B cell (primary cell): ENCODE measurements at regions of chr10 and their contacts with region 1.

Region 1: GRCh38 chr10:62816331-62817120 is at the start of gene EGR2:
- DNase-seq: peak; percentile 98
- ATAC-seq: peak; percentile 74
- H3K4me3 ChIP-seq: peak within 1 kb of the TSS; percentile 66 to 88 (median 72)
- H3K4me3 Mint-ChIP-seq: peak within 1 kb of the TSS; percentile 100
- H3K27ac ChIP-seq: peak within 1 kb of the TSS; percentile 77 to 84
- H3K27ac Mint-ChIP-seq: peak within 1 kb of the TSS; percentile 99
- H3K4me1 ChIP-seq: peaks cover 33 to 42% of the 10 kb centered on the region in 2 donors
- H3K4me1 Mint-ChIP-seq: peaks cover 54% of the 10 kb centered on the region
- H3K27me3 ChIP-seq: peaks cover 0 to 37% (median 9%) of the 10 kb centered on the region in 4 experiments
- H3K27me3 Mint-ChIP-seq: peaks cover 7% of the 10 kb centered on the region
- CTCF ChIP-seq: no peak
- total RNA-seq, gene EGR2: 6.3 and 6.6 TPM in 2 replicates

Region 2: GRCh38 chr10:62268399-62269114 is 548.0 kb before region 1 on chr10 and contains the start of gene RTKN2:
- CTCF ChIA-PET with region 1: no interaction called
- POLR2A ChIA-PET with region 1: no interaction called
- intact Hi-C with region 1: loop called (anchors 5 kb)
- DNase-seq: peak; percentile 81
- ATAC-seq: peak; percentile 90
- H3K4me3 ChIP-seq: peak within 1 kb of the TSS; percentile 51 to 73 (median 68)
- H3K4me3 Mint-ChIP-seq: peak within 1 kb of the TSS; percentile 92
- H3K27ac ChIP-seq: peak within 1 kb of the TSS in 1 of 2 donors; percentile 25
- H3K27ac Mint-ChIP-seq: no peak within 1 kb of the TSS
- H3K4me1 ChIP-seq: peaks cover 14 to 15% of the 10 kb centered on the region in 2 donors
- H3K4me1 Mint-ChIP-seq: peaks cover 11% of the 10 kb centered on the region
- H3K27me3 ChIP-seq: peaks cover 0 to 17% (median 9%) of the 10 kb centered on the region in 4 experiments
- H3K27me3 Mint-ChIP-seq: peaks cover 14% of the 10 kb centered on the region
- CTCF ChIP-seq: no peak
- total RNA-seq, gene RTKN2: 0.22 and 0.53 TPM in 2 replicates

Region 3: DNA sequence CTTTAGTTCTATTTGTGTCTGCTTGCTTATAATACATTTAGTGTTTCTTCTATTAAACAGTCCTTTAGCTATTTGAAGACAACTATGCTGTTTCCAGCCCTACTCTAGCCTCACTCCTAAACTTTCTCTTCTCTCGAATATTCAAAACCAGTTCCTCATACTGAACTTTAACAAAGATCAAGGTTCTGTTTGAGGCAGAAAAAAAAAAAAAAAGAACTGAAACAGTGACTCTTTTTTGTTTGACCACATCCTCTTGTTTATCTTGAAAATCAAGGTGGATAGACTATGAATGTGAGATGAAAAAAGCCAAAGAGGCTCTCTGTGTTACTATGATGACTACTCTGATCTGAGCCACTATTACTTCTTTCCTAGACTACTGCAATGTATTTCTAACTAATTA is 288.1 kb before region 1 on chr10:
- CTCF ChIA-PET with region 1: interaction called, 26 read pairs
- POLR2A ChIA-PET with region 1: interaction called, 11 read pairs
- intact Hi-C with region 1: loop called (anchors 1 kb)
- DNase-seq: peak; percentile 77
- ATAC-seq: peak; percentile 64
- H3K4me3 ChIP-seq: peak overlapping the region in 1 of 5 experiments; percentile 38
- H3K4me3 Mint-ChIP-seq: peak overlapping the region; percentile 66
- H3K27ac ChIP-seq: peak overlapping the region; percentile 84 to 90
- H3K27ac Mint-ChIP-seq: peak overlapping the region; percentile 96
- H3K4me1 ChIP-seq: peaks cover 47 to 51% of the 10 kb centered on the region in 2 donors
- H3K4me1 Mint-ChIP-seq: peaks cover 62% of the 10 kb centered on the region
- H3K27me3 ChIP-seq: no peaks in the 10 kb centered on the region
- H3K27me3 Mint-ChIP-seq: no peaks in the 10 kb centered on the region
- CTCF ChIP-seq: no peak

Region 4: GRCh38 chr10:62632071-62632809 is 184.3 kb before region 1 on chr10:
- CTCF ChIA-PET with region 1: interaction called, 9 read pairs
- POLR2A ChIA-PET with region 1: interaction called, 4 read pairs
- intact Hi-C with region 1: loop called (anchors 1 kb)
- DNase-seq: peak; percentile 84
- ATAC-seq: peak; percentile 81
- H3K4me3 ChIP-seq: peak overlapping the region in 4 of 5 experiments; percentile 31 to 56 (median 40)
- H3K4me3 Mint-ChIP-seq: peak overlapping the region; percentile 90
- H3K27ac ChIP-seq: peak overlapping the region; percentile 94 to 95
- H3K27ac Mint-ChIP-seq: peak overlapping the region; percentile 99
- H3K4me1 ChIP-seq: peaks cover 54 to 59% of the 10 kb centered on the region in 2 donors
- H3K4me1 Mint-ChIP-seq: peaks cover 54% of the 10 kb centered on the region
- H3K27me3 ChIP-seq: no peaks in the 10 kb centered on the region
- H3K27me3 Mint-ChIP-seq: no peaks in the 10 kb centered on the region
- CTCF ChIP-seq: no peak

Region 5: GRCh38 chr10:62732841-62733653 is 83.5 kb before region 1 on chr10:
- CTCF ChIA-PET with region 1: interaction called, 18 read pairs
- POLR2A ChIA-PET with region 1: interaction called, 6 read pairs
- intact Hi-C with region 1: loop called (anchors 5 kb)
- DNase-seq: peak; percentile 80
- ATAC-seq: peak; percentile 75
- H3K4me3 ChIP-seq: no peak overlapping the region
- H3K4me3 Mint-ChIP-seq: no peak overlapping the region
- H3K27ac ChIP-seq: peak overlapping the region in 1 of 2 donors; percentile 79
- H3K27ac Mint-ChIP-seq: peak overlapping the region; percentile 93
- H3K4me1 ChIP-seq: peaks cover 38 to 42% of the 10 kb centered on the region in 2 donors
- H3K4me1 Mint-ChIP-seq: peaks cover 4% of the 10 kb centered on the region
- H3K27me3 ChIP-seq: no peaks in the 10 kb centered on the region
- H3K27me3 Mint-ChIP-seq: no peaks in the 10 kb centered on the region
- CTCF ChIP-seq: no peak

Region 6: DNA sequence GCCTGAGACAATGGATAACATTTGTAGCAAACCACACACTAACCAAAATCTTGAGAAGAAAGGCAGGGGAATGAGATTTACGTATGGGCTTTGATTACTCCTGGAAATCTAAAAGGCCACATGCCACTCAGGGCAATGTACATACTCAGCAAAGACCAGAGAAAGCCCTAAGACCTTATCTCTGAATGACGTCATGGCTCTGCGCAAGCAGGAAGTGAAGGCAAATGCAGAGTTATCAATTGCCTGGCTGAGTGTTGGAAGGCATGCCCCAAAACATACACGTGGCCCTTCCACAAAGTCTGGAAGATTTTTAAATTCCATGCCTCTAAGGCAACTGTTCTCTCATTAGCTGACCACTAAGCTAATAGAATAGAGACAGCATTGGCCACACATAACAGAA is 225.7 kb after region 1 on chr10:
- CTCF ChIA-PET with region 1: no interaction called
- POLR2A ChIA-PET with region 1: no interaction called
- intact Hi-C with region 1: no loop called
- DNase-seq: no peak
- ATAC-seq: no peak
- H3K4me3 ChIP-seq: no peak overlapping the region
- H3K4me3 Mint-ChIP-seq: no peak overlapping the region
- H3K27ac ChIP-seq: no peak overlapping the region
- H3K27ac Mint-ChIP-seq: no peak overlapping the region
- H3K4me1 ChIP-seq: no peaks in the 10 kb centered on the region
- H3K4me1 Mint-ChIP-seq: no peaks in the 10 kb centered on the region
- H3K27me3 ChIP-seq: peaks cover 0 to 13% (median 6%) of the 10 kb centered on the region in 4 experiments
- H3K27me3 Mint-ChIP-seq: peaks cover 48% of the 10 kb centered on the region
- CTCF ChIP-seq: no peak

Region 7: GRCh38 chr10:63133056-63133820 is 316.7 kb after region 1 on chr10 and contains the start of gene NRBF2:
- CTCF ChIA-PET with region 1: interaction called, 6 read pairs
- POLR2A ChIA-PET with region 1: interaction called, 4 read pairs
- intact Hi-C with region 1: loop called (anchors 1 kb)
- DNase-seq: peak; percentile 99
- ATAC-seq: peak; percentile 86
- H3K4me3 ChIP-seq: peak within 1 kb of the TSS; percentile 89 to 100 (median 95)
- H3K4me3 Mint-ChIP-seq: peak within 1 kb of the TSS; percentile 93
- H3K27ac ChIP-seq: peak within 1 kb of the TSS; percentile 99
- H3K27ac Mint-ChIP-seq: peak within 1 kb of the TSS; percentile 97
- H3K4me1 ChIP-seq: peaks cover 26 to 36% of the 10 kb centered on the region in 2 donors
- H3K4me1 Mint-ChIP-seq: peaks cover 43% of the 10 kb centered on the region
- H3K27me3 ChIP-seq: peaks cover 0 to 2% (median 0%) of the 10 kb centered on the region in 4 experiments
- H3K27me3 Mint-ChIP-seq: peaks cover 3% of the 10 kb centered on the region
- CTCF ChIP-seq: peak; percentile 39
- total RNA-seq, gene NRBF2: 20.5 and 24.6 TPM in 2 replicates

Region 8: GRCh38 chr10:63720072-63720537 is 903.6 kb after region 1 on chr10:
- CTCF ChIA-PET with region 1: interaction called, 11 read pairs
- POLR2A ChIA-PET with region 1: no interaction called
- intact Hi-C with region 1: no loop called
- DNase-seq: peak; percentile 76
- ATAC-seq: peak; percentile 94
- H3K4me3 ChIP-seq: no peak overlapping the region
- H3K4me3 Mint-ChIP-seq: no peak overlapping the region
- H3K27ac ChIP-seq: no peak overlapping the region
- H3K27ac Mint-ChIP-seq: no peak overlapping the region
- H3K4me1 ChIP-seq: no peaks in the 10 kb centered on the region
- H3K4me1 Mint-ChIP-seq: peaks cover 7% of the 10 kb centered on the region
- H3K27me3 ChIP-seq: peaks cover 0 to 13% (median 2%) of the 10 kb centered on the region in 4 experiments
- H3K27me3 Mint-ChIP-seq: peaks cover 13% of the 10 kb centered on the region
- CTCF ChIP-seq: peak; percentile 100